ENCODE measurements at regions of chr20 and their contacts with region 1.

Region 1: GRCh38 chr20:49846206-49846807 is 33.7 kb downstream of the SLC9A8 start:
- DNase-seq: peak; percentile 76
- ATAC-seq: peak; percentile 61
- H3K4me3 ChIP-seq: no peak overlapping the region
- H3K4me3 Mint-ChIP-seq: no peak overlapping the region
- H3K27ac ChIP-seq: no peak overlapping the region
- H3K27ac Mint-ChIP-seq: no peak overlapping the region
- H3K4me1 ChIP-seq: no peaks in the 10 kb centered on the region
- H3K4me1 Mint-ChIP-seq: peaks cover 4% of the 10 kb centered on the region
- H3K27me3 ChIP-seq: no peaks in the 10 kb centered on the region
- H3K27me3 Mint-ChIP-seq: no peaks in the 10 kb centered on the region
- CTCF ChIP-seq: peak; percentile 84

Region 2: GRCh38 chr20:48260279-48260797 is 1586.0 kb before region 1 on chr20:
- CTCF ChIA-PET with region 1: no interaction called
- POLR2A ChIA-PET with region 1: no interaction called
- intact Hi-C with region 1: no loop called
- DNase-seq: no peak
- ATAC-seq: no peak
- H3K4me3 ChIP-seq: no peak overlapping the region
- H3K4me3 Mint-ChIP-seq: no peak overlapping the region
- H3K27ac ChIP-seq: no peak overlapping the region
- H3K27ac Mint-ChIP-seq: no peak overlapping the region
- H3K4me1 ChIP-seq: no peaks in the 10 kb centered on the region
- H3K4me1 Mint-ChIP-seq: no peaks in the 10 kb centered on the region
- H3K27me3 ChIP-seq: no peaks in the 10 kb centered on the region
- H3K27me3 Mint-ChIP-seq: peaks cover 24% of the 10 kb centered on the region
- CTCF ChIP-seq: no peak

Region 3: DNA sequence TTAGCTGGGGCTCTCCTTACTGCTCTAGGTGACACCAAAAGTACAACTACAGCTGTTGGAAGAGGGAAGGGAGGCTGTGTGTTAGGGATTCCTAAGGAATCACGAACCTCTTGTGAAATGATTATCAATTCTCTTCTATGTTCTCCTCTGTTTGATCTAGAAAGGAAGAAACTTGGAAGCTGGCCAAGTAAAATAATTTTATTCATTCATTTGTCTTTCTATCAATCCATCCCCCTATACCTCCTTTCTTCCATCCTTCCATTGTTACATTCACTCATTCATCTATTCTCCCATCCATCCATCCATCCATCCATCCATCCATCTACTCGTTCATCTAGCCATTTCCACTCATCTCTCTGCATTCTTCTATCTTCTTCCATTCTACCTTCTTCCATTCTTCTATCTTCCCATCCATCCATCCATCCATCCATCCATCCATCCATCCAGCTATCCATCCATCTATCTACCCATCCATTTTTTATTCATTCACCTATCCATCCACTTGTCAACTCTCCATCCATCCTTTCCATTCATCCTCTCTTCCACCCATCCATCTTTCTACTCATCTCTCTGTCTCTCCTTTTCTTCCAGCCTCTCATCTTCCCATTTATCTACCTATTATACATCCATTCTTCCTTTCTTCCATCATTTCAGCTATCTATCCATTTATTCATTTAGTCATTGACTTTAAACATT is 515.6 kb before region 1 on chr20:
- CTCF ChIA-PET with region 1: interaction called, 11 read pairs
- POLR2A ChIA-PET with region 1: no interaction called
- intact Hi-C with region 1: loop called (anchors 5 kb)
- DNase-seq: no peak
- ATAC-seq: no peak
- H3K4me3 ChIP-seq: no peak overlapping the region
- H3K4me3 Mint-ChIP-seq: no peak overlapping the region
- H3K27ac ChIP-seq: no peak overlapping the region
- H3K27ac Mint-ChIP-seq: no peak overlapping the region
- H3K4me1 ChIP-seq: no peaks in the 10 kb centered on the region
- H3K4me1 Mint-ChIP-seq: no peaks in the 10 kb centered on the region
- H3K27me3 ChIP-seq: peaks cover 0 to 8% (median 7%) of the 10 kb centered on the region in 4 experiments
- H3K27me3 Mint-ChIP-seq: peaks cover 35% of the 10 kb centered on the region
- CTCF ChIP-seq: no peak

Region 4: DNA sequence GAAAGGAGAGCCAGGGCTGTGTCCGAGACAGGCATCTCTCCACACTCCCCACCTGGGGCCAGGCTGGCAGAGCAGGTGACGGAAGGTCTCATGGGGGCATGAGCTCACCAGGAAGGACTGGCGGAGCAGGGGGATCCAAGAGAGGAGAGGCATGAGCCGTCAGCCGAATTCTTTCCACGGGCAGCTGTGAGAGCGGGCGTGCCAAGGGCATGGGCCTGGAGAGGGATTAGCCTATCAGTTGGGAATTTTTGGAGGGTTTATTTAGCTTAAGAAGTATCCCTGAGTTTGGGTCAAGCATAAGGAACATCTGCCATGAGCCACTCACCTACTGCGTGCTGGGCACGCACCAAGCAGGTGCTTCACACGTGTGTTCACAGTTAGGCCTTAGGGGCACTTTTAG is 508.2 kb before region 1 on chr20:
- CTCF ChIA-PET with region 1: interaction called, 11 read pairs
- POLR2A ChIA-PET with region 1: no interaction called
- intact Hi-C with region 1: loop called (anchors 5 kb)
- DNase-seq: no peak
- ATAC-seq: no peak
- H3K4me3 ChIP-seq: no peak overlapping the region
- H3K4me3 Mint-ChIP-seq: no peak overlapping the region
- H3K27ac ChIP-seq: no peak overlapping the region
- H3K27ac Mint-ChIP-seq: no peak overlapping the region
- H3K4me1 ChIP-seq: no peaks in the 10 kb centered on the region
- H3K4me1 Mint-ChIP-seq: no peaks in the 10 kb centered on the region
- H3K27me3 ChIP-seq: peaks cover 0 to 8% (median 1%) of the 10 kb centered on the region in 4 experiments
- H3K27me3 Mint-ChIP-seq: peaks cover 17% of the 10 kb centered on the region
- CTCF ChIP-seq: no peak

Region 5: DNA sequence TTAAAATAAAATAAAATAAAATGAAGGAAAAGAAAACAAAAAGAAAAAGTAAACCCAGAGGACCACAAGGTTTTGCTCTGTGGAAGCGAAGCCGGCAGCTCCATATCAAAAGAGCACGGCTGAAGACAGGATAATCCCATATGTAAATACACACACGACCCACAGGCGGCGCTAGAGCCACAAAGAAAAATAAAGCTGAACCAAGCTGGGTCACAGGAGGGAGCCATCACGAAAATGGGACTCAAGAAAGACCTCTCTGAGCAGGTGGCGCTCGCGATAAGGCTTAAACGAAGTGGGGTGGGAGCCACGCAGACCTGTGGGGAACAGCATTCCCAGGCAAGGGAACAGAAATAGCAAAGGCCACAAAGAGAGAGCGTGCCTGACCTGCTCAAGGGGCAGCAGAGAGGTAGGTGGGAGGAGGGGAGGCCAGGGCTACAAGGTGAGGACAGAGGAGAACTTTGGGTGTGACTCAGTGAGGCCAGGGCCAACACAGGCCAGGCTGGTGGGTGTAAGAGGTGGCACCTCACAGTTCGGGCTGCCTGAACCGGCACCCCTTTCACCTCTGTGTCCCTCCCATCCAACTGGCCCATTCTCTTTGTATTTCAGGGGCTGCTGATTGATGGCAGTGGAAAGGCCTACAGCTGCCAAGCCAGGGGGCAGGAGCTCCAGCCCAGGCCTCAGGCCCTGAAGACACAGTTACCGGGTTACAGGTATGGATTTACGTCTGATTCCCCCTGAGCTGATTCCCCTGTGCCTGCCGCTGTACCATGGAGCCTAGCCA is 304.4 kb before region 1 on chr20:
- CTCF ChIA-PET with region 1: interaction called, 11 read pairs
- POLR2A ChIA-PET with region 1: no interaction called
- intact Hi-C with region 1: loop called (anchors 1 kb)
- DNase-seq: peak; percentile 67
- ATAC-seq: peak; percentile 39
- H3K4me3 ChIP-seq: no peak overlapping the region
- H3K4me3 Mint-ChIP-seq: no peak overlapping the region
- H3K27ac ChIP-seq: no peak overlapping the region
- H3K27ac Mint-ChIP-seq: no peak overlapping the region
- H3K4me1 ChIP-seq: no peaks in the 10 kb centered on the region
- H3K4me1 Mint-ChIP-seq: no peaks in the 10 kb centered on the region
- H3K27me3 ChIP-seq: peaks cover 0 to 8% (median 3%) of the 10 kb centered on the region in 4 experiments
- H3K27me3 Mint-ChIP-seq: peaks cover 16% of the 10 kb centered on the region
- CTCF ChIP-seq: peak; percentile 70

Region 6: GRCh38 chr20:49610701-49611538 is 235.4 kb before region 1 on chr20:
- CTCF ChIA-PET with region 1: interaction called, 241 read pairs
- POLR2A ChIA-PET with region 1: no interaction called
- intact Hi-C with region 1: loop called (anchors 1 kb)
- DNase-seq: peak; percentile 84
- ATAC-seq: peak; percentile 88
- H3K4me3 ChIP-seq: peak overlapping the region in 2 of 5 experiments; percentile 15
- H3K4me3 Mint-ChIP-seq: peak overlapping the region; percentile 67
- H3K27ac ChIP-seq: peak overlapping the region in 1 of 2 donors; percentile 6
- H3K27ac Mint-ChIP-seq: no peak overlapping the region
- H3K4me1 ChIP-seq: peaks cover 14 to 20% of the 10 kb centered on the region in 2 donors
- H3K4me1 Mint-ChIP-seq: peaks cover 18% of the 10 kb centered on the region
- H3K27me3 ChIP-seq: peaks cover 0 to 29% (median 8%) of the 10 kb centered on the region in 4 experiments
- H3K27me3 Mint-ChIP-seq: peaks cover 14% of the 10 kb centered on the region
- CTCF ChIP-seq: peak; percentile 100

Region 7: DNA sequence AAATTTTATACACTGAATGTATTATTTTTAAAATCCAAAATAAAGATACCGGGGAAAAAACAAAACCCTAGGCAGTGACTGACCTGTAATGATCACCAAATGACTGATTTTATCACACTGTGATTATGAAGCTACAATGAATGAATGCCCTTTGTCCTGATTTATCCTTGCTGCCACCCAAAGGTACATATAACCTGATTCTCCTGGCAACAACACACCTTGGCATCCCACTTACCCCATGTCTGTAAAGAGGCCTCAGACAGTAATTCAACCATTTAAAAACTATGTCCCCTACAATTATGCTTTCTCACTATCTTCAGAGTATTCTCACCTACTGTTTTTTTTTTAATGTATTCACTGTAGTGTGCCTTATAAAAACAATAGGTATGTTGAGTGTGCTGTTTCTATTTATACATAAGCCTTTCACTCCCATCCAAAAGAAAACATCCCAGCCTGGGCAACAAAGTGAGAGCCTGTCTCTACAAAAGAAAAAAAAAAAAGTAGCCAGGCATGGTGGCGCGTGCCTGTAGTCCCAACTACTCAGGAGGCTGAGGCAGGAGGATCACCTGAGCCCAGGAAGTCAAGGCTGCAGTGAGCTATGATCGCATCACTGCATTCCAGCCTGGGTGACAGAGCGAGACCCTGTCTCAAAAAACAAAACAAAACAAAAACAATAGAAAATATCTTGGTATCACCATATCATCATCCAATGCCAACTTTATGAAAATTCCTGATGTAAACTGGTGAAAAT is 154.3 kb before region 1 on chr20:
- CTCF ChIA-PET with region 1: interaction called, 12 read pairs
- POLR2A ChIA-PET with region 1: no interaction called
- intact Hi-C with region 1: no loop called
- DNase-seq: no peak
- ATAC-seq: no peak
- H3K4me3 ChIP-seq: no peak overlapping the region
- H3K4me3 Mint-ChIP-seq: no peak overlapping the region
- H3K27ac ChIP-seq: no peak overlapping the region
- H3K27ac Mint-ChIP-seq: no peak overlapping the region
- H3K4me1 ChIP-seq: peaks cover 0 to 9% of the 10 kb centered on the region in 2 donors
- H3K4me1 Mint-ChIP-seq: peaks cover 34% of the 10 kb centered on the region
- H3K27me3 ChIP-seq: no peaks in the 10 kb centered on the region
- H3K27me3 Mint-ChIP-seq: no peaks in the 10 kb centered on the region
- CTCF ChIP-seq: no peak

Region 8: GRCh38 chr20:49832632-49833327 is 13.5 kb before region 1 on chr20:
- CTCF ChIA-PET with region 1: interaction called, 18 read pairs
- POLR2A ChIA-PET with region 1: no interaction called
- intact Hi-C with region 1: no loop called
- DNase-seq: peak; percentile 37
- ATAC-seq: no peak
- H3K4me3 ChIP-seq: no peak overlapping the region
- H3K4me3 Mint-ChIP-seq: no peak overlapping the region
- H3K27ac ChIP-seq: peak overlapping the region in 1 of 2 donors; percentile 34
- H3K27ac Mint-ChIP-seq: peak overlapping the region; percentile 50
- H3K4me1 ChIP-seq: peaks cover 7 to 13% of the 10 kb centered on the region in 2 donors
- H3K4me1 Mint-ChIP-seq: peaks cover 19% of the 10 kb centered on the region
- H3K27me3 ChIP-seq: no peaks in the 10 kb centered on the region
- H3K27me3 Mint-ChIP-seq: no peaks in the 10 kb centered on the region
- CTCF ChIP-seq: no peak

Measured in B cell (primary cell).